ENCODE measurements at regions of chr2 and their contacts with region 1.

Region 1: DNA sequence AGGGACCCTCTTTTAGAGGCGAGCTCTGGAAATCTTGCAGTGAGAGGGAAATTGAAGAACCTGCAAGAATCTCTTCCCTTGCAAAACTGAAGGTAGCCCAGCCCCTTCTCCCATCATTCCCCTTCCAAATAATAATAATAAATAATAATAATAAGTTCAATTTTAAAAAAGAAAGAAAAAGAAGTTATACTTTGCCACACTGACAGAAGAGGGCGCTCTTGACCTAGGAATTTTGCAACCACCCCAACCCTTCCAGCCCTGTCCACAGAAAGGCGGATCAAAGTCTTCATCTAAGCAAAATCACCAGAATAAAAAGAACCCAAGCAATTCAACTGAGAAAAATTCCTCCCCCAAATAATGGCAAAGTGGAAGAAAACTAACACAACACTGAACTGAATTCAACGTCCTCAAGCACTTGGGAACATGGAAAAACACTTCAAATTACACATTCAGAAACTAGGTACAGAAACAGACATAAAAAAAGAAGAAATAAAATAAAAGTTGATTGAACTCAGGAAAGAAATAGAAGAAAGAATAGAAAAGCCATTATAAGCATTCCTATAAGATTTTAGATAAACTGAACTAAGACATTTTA is 98.9 kb upstream of the GLS start:
- DNase-seq: peak in 4 of 5 donors; percentile 35 to 51 (median 50)
- H3K4me3 ChIP-seq: no peak overlapping the region
- H3K4me3 Mint-ChIP-seq: no peak overlapping the region
- H3K27ac ChIP-seq: no peak overlapping the region
- H3K27ac Mint-ChIP-seq: peak overlapping the region in 1 of 7 donors; percentile 65
- H3K4me1 ChIP-seq: no peaks in the 10 kb centered on the region
- H3K4me1 Mint-ChIP-seq: peaks cover 0 to 3% (median 1%) of the 10 kb centered on the region in 4 donors
- H3K27me3 ChIP-seq: no peaks in the 10 kb centered on the region
- H3K27me3 Mint-ChIP-seq: peaks cover 3 to 9% of the 10 kb centered on the region in 2 donors

Region 2: DNA sequence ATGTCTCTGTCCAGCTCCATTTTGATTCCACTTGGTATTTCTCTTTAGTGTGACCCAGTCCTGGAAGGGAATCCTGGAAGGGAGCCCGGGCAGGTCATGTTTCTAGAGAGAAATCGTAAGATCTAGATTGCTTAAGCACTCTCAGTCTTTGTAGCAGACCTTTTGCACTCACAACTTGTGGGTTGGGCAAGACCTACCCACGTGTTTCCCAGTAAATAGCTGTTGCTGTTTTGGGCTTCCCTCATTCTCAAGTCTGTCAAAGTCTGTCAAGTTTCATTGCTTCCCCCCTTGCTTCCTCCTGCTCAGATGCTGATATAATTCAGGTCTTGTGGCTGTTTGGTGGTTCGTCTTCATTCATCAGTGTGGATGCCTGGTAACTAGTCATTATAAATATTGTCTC is 229.8 kb before region 1 on chr2:
- CTCF ChIA-PET with region 1: no interaction called
- POLR2A ChIA-PET with region 1: no interaction called
- intact Hi-C with region 1: no loop called
- DNase-seq: peak in 1 of 5 donors; percentile 17
- H3K4me3 ChIP-seq: no peak overlapping the region
- H3K4me3 Mint-ChIP-seq: peak overlapping the region in 2 of 8 donors; percentile 42 to 43
- H3K27ac ChIP-seq: no peak overlapping the region
- H3K27ac Mint-ChIP-seq: peak overlapping the region in 2 of 7 donors; percentile 43 to 82
- H3K4me1 ChIP-seq: no peaks in the 10 kb centered on the region
- H3K4me1 Mint-ChIP-seq: peaks cover 1 to 7% (median 6%) of the 10 kb centered on the region in 4 donors
- H3K27me3 ChIP-seq: no peaks in the 10 kb centered on the region
- H3K27me3 Mint-ChIP-seq: no peaks in the 10 kb centered on the region

Region 3: GRCh38 chr2:190636373-190636772 is 145.3 kb before region 1 on chr2:
- CTCF ChIA-PET with region 1: no interaction called
- POLR2A ChIA-PET with region 1: no interaction called
- intact Hi-C with region 1: no loop called
- DNase-seq: no peak
- H3K4me3 ChIP-seq: no peak overlapping the region
- H3K4me3 Mint-ChIP-seq: no peak overlapping the region
- H3K27ac ChIP-seq: no peak overlapping the region
- H3K27ac Mint-ChIP-seq: peak overlapping the region in 1 of 7 donors; percentile 12
- H3K4me1 ChIP-seq: no peaks in the 10 kb centered on the region
- H3K4me1 Mint-ChIP-seq: peaks cover 0 to 6% (median under 1%) of the 10 kb centered on the region in 4 donors
- H3K27me3 ChIP-seq: no peaks in the 10 kb centered on the region
- H3K27me3 Mint-ChIP-seq: no peaks in the 10 kb centered on the region

Region 4: DNA sequence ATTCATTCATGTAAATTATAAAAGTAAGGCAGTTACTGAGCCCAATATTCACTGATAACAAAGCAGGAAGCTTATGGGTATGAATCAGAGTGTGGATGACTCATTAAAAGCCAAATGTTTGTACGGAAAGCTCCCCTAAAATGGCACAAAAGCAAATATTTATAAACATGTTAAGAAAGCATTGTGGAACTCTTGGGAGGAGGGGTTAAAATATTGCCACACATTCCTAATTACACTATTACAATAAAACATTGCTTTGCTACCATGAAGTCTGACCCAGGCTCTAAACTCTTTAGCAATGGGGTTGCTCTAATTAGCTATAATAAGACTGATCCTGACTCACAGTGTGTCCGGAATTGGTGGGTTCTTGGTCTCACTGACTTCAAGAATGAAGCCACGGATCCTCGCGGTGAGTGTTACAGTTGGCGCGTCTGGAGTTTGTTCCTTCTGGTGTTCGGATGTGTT is 21.9 kb before region 1 on chr2:
- CTCF ChIA-PET with region 1: interaction called, 10 read pairs
- POLR2A ChIA-PET with region 1: no interaction called
- intact Hi-C with region 1: no loop called
- DNase-seq: no peak
- H3K4me3 ChIP-seq: no peak overlapping the region
- H3K4me3 Mint-ChIP-seq: peak overlapping the region; percentile 14 to 70 (median 50)
- H3K27ac ChIP-seq: no peak overlapping the region
- H3K27ac Mint-ChIP-seq: no peak overlapping the region
- H3K4me1 ChIP-seq: no peaks in the 10 kb centered on the region
- H3K4me1 Mint-ChIP-seq: peaks cover 3 to 10% (median 4%) of the 10 kb centered on the region in 4 donors
- H3K27me3 ChIP-seq: no peaks in the 10 kb centered on the region
- H3K27me3 Mint-ChIP-seq: peaks cover 0 to 8% of the 10 kb centered on the region in 2 donors

Region 5: GRCh38 chr2:190858817-190859216 is 77.1 kb after region 1 on chr2:
- CTCF ChIA-PET with region 1: no interaction called
- POLR2A ChIA-PET with region 1: no interaction called
- intact Hi-C with region 1: no loop called
- DNase-seq: no peak
- H3K4me3 ChIP-seq: no peak overlapping the region
- H3K4me3 Mint-ChIP-seq: no peak overlapping the region
- H3K27ac ChIP-seq: no peak overlapping the region
- H3K27ac Mint-ChIP-seq: no peak overlapping the region
- H3K4me1 ChIP-seq: peaks cover 10% of the 10 kb centered on the region
- H3K4me1 Mint-ChIP-seq: peaks cover 10 to 17% (median 17%) of the 10 kb centered on the region in 4 donors
- H3K27me3 ChIP-seq: no peaks in the 10 kb centered on the region
- H3K27me3 Mint-ChIP-seq: peaks cover 0 to 1% of the 10 kb centered on the region in 2 donors

Region 6: DNA sequence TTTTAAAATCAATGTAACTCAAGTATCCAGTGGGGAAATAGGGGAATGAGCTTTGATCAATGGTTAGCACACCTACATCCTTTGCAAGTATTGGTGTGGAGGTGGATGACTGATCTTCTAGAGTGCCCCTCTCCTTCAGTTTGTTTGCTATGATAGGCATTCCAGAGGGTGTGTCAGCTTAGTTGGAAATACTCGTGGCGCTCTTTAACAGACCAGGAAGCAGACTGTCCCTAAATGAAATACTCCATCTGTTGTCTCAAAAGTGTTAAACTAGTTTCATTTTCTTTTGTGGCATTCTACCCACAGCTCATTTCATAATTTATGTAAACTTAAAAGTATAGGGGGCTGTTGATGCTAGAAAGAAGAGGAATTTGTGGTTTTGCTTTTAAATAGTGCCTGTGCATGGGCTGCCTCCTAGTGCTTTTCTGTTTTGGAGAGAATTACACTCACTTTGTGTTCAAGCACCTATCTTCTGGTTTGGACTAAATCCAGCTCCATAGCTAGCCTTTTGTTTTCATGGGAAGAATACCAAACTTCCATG is 166.1 kb after region 1 on chr2:
- CTCF ChIA-PET with region 1: interaction called, 3 read pairs
- POLR2A ChIA-PET with region 1: no interaction called
- intact Hi-C with region 1: loop called (anchors 1 kb)
- DNase-seq: peak in 4 of 5 donors; percentile 26 to 58 (median 48)
- H3K4me3 ChIP-seq: no peak overlapping the region
- H3K4me3 Mint-ChIP-seq: peak overlapping the region in 7 of 8 donors; percentile 13 to 77 (median 52)
- H3K27ac ChIP-seq: peak overlapping the region; percentile 14
- H3K27ac Mint-ChIP-seq: peak overlapping the region in 6 of 7 donors; percentile 66 to 91 (median 86)
- H3K4me1 ChIP-seq: peaks cover 29% of the 10 kb centered on the region
- H3K4me1 Mint-ChIP-seq: peaks cover 19 to 24% (median 20%) of the 10 kb centered on the region in 4 donors
- H3K27me3 ChIP-seq: no peaks in the 10 kb centered on the region
- H3K27me3 Mint-ChIP-seq: no peaks in the 10 kb centered on the region

Region 7: GRCh38 chr2:191030521-191031154 is 248.9 kb after region 1 on chr2:
- CTCF ChIA-PET with region 1: interaction called, 11 read pairs
- POLR2A ChIA-PET with region 1: no interaction called
- intact Hi-C with region 1: loop called (anchors 1 kb)
- DNase-seq: peak; percentile 52 to 69 (median 56)
- H3K4me3 ChIP-seq: no peak overlapping the region
- H3K4me3 Mint-ChIP-seq: peak overlapping the region in 4 of 8 donors; percentile 1 to 47 (median 7)
- H3K27ac ChIP-seq: peak overlapping the region; percentile 21
- H3K27ac Mint-ChIP-seq: peak overlapping the region; percentile 15 to 84 (median 44)
- H3K4me1 ChIP-seq: peaks cover 34% of the 10 kb centered on the region
- H3K4me1 Mint-ChIP-seq: peaks cover 21 to 37% (median 30%) of the 10 kb centered on the region in 4 donors
- H3K27me3 ChIP-seq: no peaks in the 10 kb centered on the region
- H3K27me3 Mint-ChIP-seq: no peaks in the 10 kb centered on the region

Region 8: DNA sequence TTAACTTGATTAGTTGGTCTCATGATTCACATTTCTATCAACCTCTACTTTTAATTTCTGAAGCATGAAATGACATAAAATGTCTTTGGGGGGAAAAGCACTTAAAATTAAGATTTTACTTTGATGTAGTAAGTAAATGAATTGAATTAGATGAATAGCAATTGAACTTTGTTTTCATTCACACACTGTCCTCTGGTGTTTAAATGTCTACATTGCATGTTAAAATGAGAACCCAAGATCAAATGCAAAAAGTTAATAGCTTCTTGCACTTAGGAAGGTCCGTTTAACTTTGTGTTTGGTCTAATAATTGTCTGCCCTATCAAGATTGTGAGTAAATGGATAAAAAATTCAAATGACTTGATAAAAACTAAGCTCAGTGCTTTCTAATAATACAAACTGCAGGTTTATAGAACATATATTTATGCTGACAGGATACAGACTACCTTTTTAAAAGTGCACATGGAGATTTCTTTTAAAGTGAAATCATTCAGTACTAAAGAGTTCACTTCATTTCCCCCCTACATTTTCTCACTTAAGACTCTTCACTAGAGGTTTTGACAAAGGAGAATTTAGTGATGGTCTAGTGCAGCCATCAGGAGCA is 740.0 kb after region 1 on chr2:
- CTCF ChIA-PET with region 1: no interaction called
- POLR2A ChIA-PET with region 1: no interaction called
- intact Hi-C with region 1: loop called (anchors 10 kb)
- DNase-seq: peak in 4 of 5 donors; percentile 20 to 37 (median 24)
- H3K4me3 ChIP-seq: no peak overlapping the region
- H3K4me3 Mint-ChIP-seq: no peak overlapping the region
- H3K27ac ChIP-seq: no peak overlapping the region
- H3K27ac Mint-ChIP-seq: no peak overlapping the region
- H3K4me1 ChIP-seq: no peaks in the 10 kb centered on the region
- H3K4me1 Mint-ChIP-seq: no peaks in the 10 kb centered on the region
- H3K27me3 ChIP-seq: no peaks in the 10 kb centered on the region
- H3K27me3 Mint-ChIP-seq: peaks cover 4 to 5% of the 10 kb centered on the region in 2 donors

Measured in CD4-positive, alpha-beta memory T cell (primary cell).